ENCODE measurements at regions of chr1 and their contacts with region 1.

Region 1: DNA sequence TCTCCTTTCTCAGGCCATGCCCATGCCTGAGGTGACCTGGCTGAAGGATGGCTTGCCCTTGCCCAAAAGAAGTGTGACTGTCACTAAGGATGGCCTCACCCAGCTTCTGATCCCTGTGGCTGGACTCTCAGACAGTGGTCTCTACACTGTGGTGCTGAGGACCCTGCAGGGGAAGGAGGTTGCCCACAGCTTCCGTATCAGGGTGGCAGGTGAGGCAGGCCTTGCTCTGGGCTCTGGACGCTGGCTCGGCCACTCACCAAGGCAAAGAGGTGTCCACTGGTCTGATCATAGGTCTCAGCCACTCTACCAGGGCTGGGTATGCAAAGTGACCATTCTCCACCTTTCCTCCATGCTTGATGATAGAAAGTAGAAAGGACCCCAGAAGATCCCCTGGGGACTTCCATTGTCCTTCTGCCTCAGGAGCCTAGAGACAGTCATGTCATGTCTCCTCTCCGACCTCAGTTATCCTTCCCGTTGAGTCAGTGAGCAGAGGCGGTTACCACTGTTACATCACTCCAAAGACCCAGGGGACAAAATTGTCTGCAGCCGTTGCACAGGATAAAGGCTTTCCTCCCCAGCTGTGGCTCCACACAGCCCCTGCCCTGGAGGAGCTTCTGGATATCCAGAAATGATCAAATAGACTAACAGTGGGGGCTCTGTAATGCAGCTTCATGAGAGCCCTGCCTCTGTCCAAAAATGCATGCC is 34.2 kb downstream of the IGFN1 start:
- DNase-seq: no peak
- ATAC-seq: no peak
- H3K4me3 Mint-ChIP-seq: no peak overlapping the region
- H3K27ac Mint-ChIP-seq: no peak overlapping the region
- H3K4me1 Mint-ChIP-seq: no peaks in the 10 kb centered on the region
- H3K27me3 Mint-ChIP-seq: peaks cover 5% of the 10 kb centered on the region
- CTCF ChIP-seq: no peak

Region 2: DNA sequence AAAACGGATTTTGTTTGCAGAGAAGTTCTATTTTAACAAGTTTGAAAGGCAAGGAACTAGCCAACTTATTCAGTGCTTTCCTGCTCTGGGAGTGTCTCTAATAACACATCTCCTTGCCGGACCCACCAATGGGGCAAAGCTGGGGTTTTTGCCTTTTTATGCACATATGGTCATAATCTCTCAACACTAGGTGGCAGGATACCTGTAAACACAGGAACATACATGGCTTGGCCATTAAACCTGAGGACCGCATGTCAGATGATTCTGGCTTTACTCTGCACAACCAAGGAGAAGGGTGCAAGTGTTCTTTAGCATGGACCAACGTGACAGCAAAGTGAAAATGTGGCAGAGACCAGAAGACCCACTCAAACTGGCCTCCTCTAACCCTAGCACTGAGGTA is 75.4 kb before region 1 on chr1:
- CTCF ChIA-PET with region 1: interaction called, 13 read pairs
- POLR2A ChIA-PET with region 1: no interaction called
- DNase-seq: no peak
- ATAC-seq: peak; percentile 7; the same call in 1 of the 2 replicates
- H3K4me3 Mint-ChIP-seq: no peak overlapping the region
- H3K27ac Mint-ChIP-seq: no peak overlapping the region
- H3K4me1 Mint-ChIP-seq: peaks cover 11% of the 10 kb centered on the region
- H3K27me3 Mint-ChIP-seq: no peaks in the 10 kb centered on the region
- CTCF ChIP-seq: no peak